ENCODE measurements at regions of chr6 and their contacts with region 1.

Region 1: DNA sequence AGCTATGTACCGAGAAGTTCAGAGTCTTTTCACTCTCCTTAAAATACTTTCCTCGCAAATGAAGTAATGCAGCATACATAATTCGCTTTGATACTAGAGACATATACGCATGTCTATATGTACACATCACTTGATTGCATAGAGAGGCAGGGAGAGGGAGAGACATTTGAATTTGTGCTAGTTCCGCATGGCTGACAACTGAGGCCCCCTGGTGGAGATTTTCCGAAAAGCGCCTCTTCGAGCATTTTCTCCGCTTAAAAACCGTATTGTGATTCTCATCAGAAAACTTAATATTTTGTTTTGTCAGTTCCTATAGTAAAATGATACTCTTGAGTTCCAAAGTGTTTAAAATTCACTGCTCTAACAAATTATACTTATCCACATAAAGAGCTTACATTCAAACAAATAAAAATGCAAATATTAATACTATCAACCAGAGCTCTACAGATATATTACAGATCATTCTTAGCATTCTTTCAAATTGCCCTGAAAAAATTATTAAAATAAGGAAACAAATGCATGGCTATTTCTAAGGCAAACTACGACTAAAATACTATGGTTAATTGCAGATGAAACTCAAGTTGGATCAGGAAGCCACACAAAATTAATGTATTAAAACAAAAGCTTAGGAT is 637 bp downstream of the MYLK4 start:
- DNase-seq: peak; percentile 77
- H3K4me3 Mint-ChIP-seq: no peak overlapping the region
- H3K27ac Mint-ChIP-seq: no peak overlapping the region
- H3K4me1 Mint-ChIP-seq: no peaks in the 10 kb centered on the region
- H3K27me3 Mint-ChIP-seq: peaks cover 58% of the 10 kb centered on the region

Region 2: DNA sequence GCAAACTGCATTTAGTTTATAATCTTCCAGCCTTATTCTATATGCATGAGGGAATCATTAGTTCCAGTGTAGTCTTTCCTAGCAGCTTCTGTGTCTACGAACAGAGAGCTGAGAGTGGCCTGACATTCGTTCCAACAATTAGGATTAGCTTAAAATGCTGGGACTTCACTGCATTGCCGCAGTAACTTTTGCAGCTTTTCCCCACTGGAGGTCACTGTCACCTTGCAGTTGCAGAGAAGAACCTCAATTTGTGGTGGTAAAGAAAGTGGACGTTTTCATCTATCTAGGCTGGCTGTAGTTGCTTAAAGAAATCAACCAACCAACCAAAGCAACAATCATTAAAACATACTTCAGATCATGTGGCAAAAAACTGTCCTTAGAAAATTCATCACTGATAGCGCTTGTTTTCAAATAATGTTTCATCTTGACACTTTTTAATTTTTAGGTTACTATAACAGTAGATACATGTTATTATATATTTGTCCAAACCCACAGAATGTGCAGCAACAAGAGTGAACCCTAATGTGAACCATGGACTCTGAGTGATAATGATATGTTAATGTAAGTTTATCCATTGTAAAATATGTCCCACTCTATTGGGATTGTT is 11.6 kb before region 1 on chr6:
- CTCF ChIA-PET with region 1: interaction called, 100 read pairs
- DNase-seq: peak; percentile 74
- H3K4me3 Mint-ChIP-seq: no peak overlapping the region
- H3K27ac Mint-ChIP-seq: no peak overlapping the region
- H3K4me1 Mint-ChIP-seq: no peaks in the 10 kb centered on the region
- H3K27me3 Mint-ChIP-seq: peaks cover 8% of the 10 kb centered on the region